ENCODE measurements at regions of chrX and their contacts with region 1.

Region 1: GRCh38 chrX:17689971-17690409 is 47.3 kb upstream of the SCML1 start:
- DNase-seq: no peak
- H3K4me3 ChIP-seq: no peak overlapping the region
- H3K27ac ChIP-seq: peak overlapping the region in 2 of 4 donors; percentile 31 to 32
- H3K4me1 ChIP-seq: no peaks in the 10 kb centered on the region
- H3K27me3 ChIP-seq: no peaks in the 10 kb centered on the region
- CTCF ChIP-seq: peak; percentile 29 to 62 (median 51)
- EP300 ChIP-seq: no peak
- POLR2A ChIP-seq: no peak

Region 2: DNA sequence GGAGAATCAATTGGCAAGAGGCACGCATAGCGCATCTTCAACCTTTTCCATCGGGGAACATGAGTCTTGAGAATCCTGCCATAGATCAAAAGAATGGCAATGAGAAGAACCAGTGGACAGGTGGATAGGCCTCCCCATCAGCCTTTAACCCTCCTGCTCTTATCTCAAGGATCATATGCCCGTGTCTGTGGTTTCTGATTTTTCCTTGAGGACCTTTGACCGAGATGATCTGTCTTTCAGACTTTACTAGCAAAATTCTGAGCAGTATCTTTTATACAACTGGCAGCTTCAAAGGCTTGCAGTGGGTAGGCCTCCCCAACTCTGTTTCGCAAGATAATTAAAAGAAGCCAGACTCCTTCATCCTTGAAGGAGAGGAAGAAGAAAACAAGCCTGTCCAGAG is 569.2 kb before region 1 on chrX:
- intact Hi-C with region 1: loop called (anchors 5 kb)
- DNase-seq: no peak
- H3K4me3 ChIP-seq: no peak overlapping the region
- H3K27ac ChIP-seq: no peak overlapping the region
- H3K4me1 ChIP-seq: no peaks in the 10 kb centered on the region
- H3K27me3 ChIP-seq: no peaks in the 10 kb centered on the region
- CTCF ChIP-seq: no peak
- EP300 ChIP-seq: no peak
- POLR2A ChIP-seq: no peak

Region 3: GRCh38 chrX:17242470-17242869 is 447.5 kb before region 1 on chrX:
- intact Hi-C with region 1: loop called (anchors 2 kb)
- DNase-seq: no peak
- H3K4me3 ChIP-seq: no peak overlapping the region
- H3K27ac ChIP-seq: no peak overlapping the region
- H3K4me1 ChIP-seq: no peaks in the 10 kb centered on the region
- H3K27me3 ChIP-seq: no peaks in the 10 kb centered on the region
- CTCF ChIP-seq: peak; percentile 51 to 69 (median 62)
- EP300 ChIP-seq: no peak
- POLR2A ChIP-seq: no peak

Region 4: DNA sequence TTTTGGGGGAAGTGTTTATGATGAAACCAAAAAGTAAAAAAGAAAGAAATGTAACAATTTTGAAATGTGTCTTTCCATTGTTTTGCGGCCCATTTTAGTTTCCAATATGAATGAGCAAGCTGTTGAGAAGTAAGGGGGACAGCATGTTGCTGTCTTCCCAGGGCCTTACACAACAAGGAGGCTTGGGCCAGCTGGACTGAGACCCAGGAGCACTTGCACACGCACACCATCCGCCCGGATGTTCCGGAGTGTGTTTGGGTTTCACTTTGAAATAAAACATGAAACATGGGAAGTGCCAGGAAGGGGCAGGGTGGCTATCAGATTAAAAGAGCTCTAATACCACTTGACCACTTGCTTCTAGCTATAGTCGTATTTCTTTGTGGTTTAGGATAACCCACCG is 170.6 kb before region 1 on chrX:
- intact Hi-C with region 1: no loop called
- DNase-seq: peak; percentile 92
- H3K4me3 ChIP-seq: no peak overlapping the region
- H3K27ac ChIP-seq: peak overlapping the region; percentile 32 to 69 (median 58)
- H3K4me1 ChIP-seq: peaks cover 0 to 35% (median 7%) of the 10 kb centered on the region in 4 donors
- H3K27me3 ChIP-seq: no peaks in the 10 kb centered on the region
- CTCF ChIP-seq: no peak
- EP300 ChIP-seq: peak in 2 of 4 donors; percentile 7 to 9
- POLR2A ChIP-seq: no peak

Region 5: GRCh38 chrX:17590892-17591740 is 98.9 kb before region 1 on chrX:
- intact Hi-C with region 1: loop called (anchors 5 kb)
- DNase-seq: peak; percentile 83
- H3K4me3 ChIP-seq: peak overlapping the region in 2 of 4 donors; percentile 8 to 18
- H3K27ac ChIP-seq: peak overlapping the region in 3 of 4 donors; percentile 61 to 76 (median 65)
- H3K4me1 ChIP-seq: peaks cover 0 to 23% (median 2%) of the 10 kb centered on the region in 4 donors
- H3K27me3 ChIP-seq: no peaks in the 10 kb centered on the region
- CTCF ChIP-seq: peak; percentile 37 to 59 (median 52)
- EP300 ChIP-seq: no peak
- POLR2A ChIP-seq: no peak

Region 6: GRCh38 chrX:17758382-17758781 is 68.4 kb after region 1 on chrX:
- intact Hi-C with region 1: no loop called
- DNase-seq: no peak
- H3K4me3 ChIP-seq: no peak overlapping the region
- H3K27ac ChIP-seq: no peak overlapping the region
- H3K4me1 ChIP-seq: no peaks in the 10 kb centered on the region
- H3K27me3 ChIP-seq: no peaks in the 10 kb centered on the region
- CTCF ChIP-seq: no peak
- EP300 ChIP-seq: no peak
- POLR2A ChIP-seq: no peak